ENCODE measurements at regions of chr21 and their contacts with region 1.

Region 1: GRCh38 chr21:45243603-45244002 is 44.1 kb downstream of the POFUT2 start:
- DNase-seq: no peak
- ATAC-seq: no peak
- H3K4me3 ChIP-seq: no peak overlapping the region
- H3K4me3 Mint-ChIP-seq: no peak overlapping the region
- H3K27ac ChIP-seq: no peak overlapping the region
- H3K27ac Mint-ChIP-seq: no peak overlapping the region
- H3K4me1 ChIP-seq: no peaks in the 10 kb centered on the region
- H3K4me1 Mint-ChIP-seq: no peaks in the 10 kb centered on the region
- H3K27me3 ChIP-seq: no peaks in the 10 kb centered on the region
- H3K27me3 Mint-ChIP-seq: peaks cover 3% of the 10 kb centered on the region
- CTCF ChIP-seq: no peak

Region 2: GRCh38 chr21:45255381-45256020 is 11.9 kb after region 1 on chr21:
- CTCF ChIA-PET with region 1: no interaction called
- POLR2A ChIA-PET with region 1: no interaction called
- intact Hi-C with region 1: loop called in 1 of 2 experiments (anchors 2 kb)
- DNase-seq: peak in 4 of 9 experiments; percentile 36 to 68 (median 48)
- ATAC-seq: peak; percentile 70
- H3K4me3 ChIP-seq: no peak overlapping the region
- H3K4me3 Mint-ChIP-seq: peak overlapping the region; percentile 47
- H3K27ac ChIP-seq: no peak overlapping the region
- H3K27ac Mint-ChIP-seq: no peak overlapping the region
- H3K4me1 ChIP-seq: peaks cover 26% of the 10 kb centered on the region
- H3K4me1 Mint-ChIP-seq: peaks cover 15% of the 10 kb centered on the region
- H3K27me3 ChIP-seq: peaks cover 3 to 20% of the 10 kb centered on the region in 2 experiments
- H3K27me3 Mint-ChIP-seq: peaks cover 11% of the 10 kb centered on the region
- CTCF ChIP-seq: no peak